ENCODE measurements at regions of chr9 and their contacts with region 1.

Region 1: DNA sequence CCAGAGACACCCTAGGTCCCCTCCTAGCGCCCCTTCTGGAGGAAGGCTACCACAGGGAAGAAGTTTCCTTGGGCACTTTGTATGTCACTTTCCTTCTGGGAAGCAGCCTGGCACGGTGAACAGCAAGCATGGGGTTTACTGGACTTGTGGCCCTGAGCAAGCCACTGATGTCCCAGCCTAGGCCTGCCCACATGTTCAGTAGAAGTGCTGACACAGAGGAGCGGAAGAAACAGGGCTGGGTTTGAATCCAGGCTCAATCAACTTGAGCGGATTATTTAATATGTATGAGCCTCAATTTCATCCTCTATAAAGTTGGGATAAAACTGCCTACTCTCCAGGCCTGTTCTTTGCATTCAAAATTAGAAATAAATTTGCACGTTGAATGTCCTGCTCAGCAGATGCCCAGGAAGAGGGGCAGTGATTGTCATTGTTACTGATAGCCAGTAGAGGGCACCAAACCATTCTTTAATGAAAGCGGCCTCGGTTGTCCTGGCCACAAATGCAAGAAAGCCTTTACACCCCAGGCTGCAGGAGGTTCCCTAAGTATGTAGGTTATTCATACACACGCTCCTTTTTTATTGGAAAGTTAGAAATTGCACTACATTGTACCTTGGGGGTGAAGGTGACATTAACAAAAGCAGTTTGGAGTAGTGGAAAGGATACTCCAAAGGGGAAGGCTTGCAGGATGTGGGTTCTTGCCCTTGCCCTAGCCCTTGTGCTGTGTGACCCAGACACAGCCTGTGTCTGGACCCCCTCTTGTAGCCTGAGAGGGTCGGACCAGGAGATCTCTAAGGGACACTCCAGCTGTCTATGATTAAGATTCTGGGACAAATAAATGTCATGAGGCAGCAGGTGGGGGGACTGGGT is 13.4 kb upstream of the XPA start:
- DNase-seq: no peak
- H3K4me3 ChIP-seq: no peak overlapping the region
- H3K27ac ChIP-seq: no peak overlapping the region
- H3K4me1 ChIP-seq: peaks cover 0 to 7% (median 0%) of the 10 kb centered on the region in 4 donors
- H3K27me3 ChIP-seq: peaks cover 2 to 7% (median 6%) of the 10 kb centered on the region in 3 donors
- CTCF ChIP-seq: peak; percentile 58 to 83 (median 69)
- EP300 ChIP-seq: no peak
- POLR2A ChIP-seq: no peak

Region 2: GRCh38 chr9:97900738-97901565 is 190.4 kb after region 1 on chr9:
- intact Hi-C with region 1: loop called (anchors 1 kb)
- DNase-seq: no peak
- H3K4me3 ChIP-seq: no peak overlapping the region
- H3K27ac ChIP-seq: no peak overlapping the region
- H3K4me1 ChIP-seq: peaks cover 0 to 10% (median 3%) of the 10 kb centered on the region in 4 donors
- H3K27me3 ChIP-seq: no peaks in the 10 kb centered on the region
- CTCF ChIP-seq: peak; percentile 24 to 70 (median 68)
- EP300 ChIP-seq: no peak
- POLR2A ChIP-seq: no peak

Region 3: GRCh38 chr9:97938081-97938644 is 227.6 kb after region 1 on chr9 and contains the start of gene HEMGN:
- intact Hi-C with region 1: no loop called
- DNase-seq: no peak
- H3K4me3 ChIP-seq: no peak within 1 kb of the TSS
- H3K27ac ChIP-seq: no peak within 1 kb of the TSS
- H3K4me1 ChIP-seq: no peaks in the 10 kb centered on the region
- H3K27me3 ChIP-seq: peaks cover 0 to 34% (median 0%) of the 10 kb centered on the region in 3 donors
- CTCF ChIP-seq: no peak
- EP300 ChIP-seq: no peak
- POLR2A ChIP-seq: no peak
- total RNA-seq, gene HEMGN: not detected

Region 4: GRCh38 chr9:98146101-98146991 is 435.8 kb after region 1 on chr9:
- intact Hi-C with region 1: no loop called
- DNase-seq: no peak
- H3K4me3 ChIP-seq: no peak overlapping the region
- H3K27ac ChIP-seq: no peak overlapping the region
- H3K4me1 ChIP-seq: no peaks in the 10 kb centered on the region
- H3K27me3 ChIP-seq: no peaks in the 10 kb centered on the region
- CTCF ChIP-seq: no peak
- EP300 ChIP-seq: no peak
- POLR2A ChIP-seq: no peak

Measured in sigmoid colon (tissue), 7 donors.